ENCODE measurements at regions of chr16 and their contacts with region 1.

Region 1: DNA sequence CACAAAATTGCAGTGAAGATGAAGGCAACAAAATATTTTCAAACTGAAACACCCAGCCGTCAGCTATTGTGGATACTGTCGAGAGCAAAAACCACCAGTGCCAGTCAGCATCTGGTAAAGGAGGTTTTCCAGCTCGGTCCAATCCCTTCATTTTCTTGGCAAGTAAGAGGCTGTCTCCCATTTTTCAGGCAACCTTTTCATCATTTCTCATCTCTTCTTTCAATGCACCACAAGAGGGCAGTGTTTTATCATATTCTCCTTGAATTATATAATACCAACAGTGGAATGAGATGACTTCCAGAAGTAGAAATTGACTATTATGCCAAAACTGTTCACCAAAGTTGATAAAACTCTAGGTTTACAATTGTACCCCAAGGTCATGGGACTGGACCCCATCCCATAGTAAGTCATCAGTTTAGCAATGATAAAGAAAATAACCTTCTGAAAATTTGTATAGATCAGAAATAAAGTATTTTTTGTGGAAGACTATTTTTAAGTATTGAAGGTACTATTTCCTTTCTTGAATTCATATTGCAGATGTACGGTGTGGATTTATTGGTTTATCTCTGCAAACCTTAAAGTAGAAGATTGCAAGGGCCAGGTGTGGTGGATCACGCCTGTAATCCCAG is 16.8 kb downstream of the NQO1 start:
- DNase-seq: no peak
- H3K4me3 ChIP-seq: no peak overlapping the region
- H3K27ac ChIP-seq: peak overlapping the region in 3 of 4 donors; percentile 43 to 75 (median 58)
- H3K4me1 ChIP-seq: peaks cover 0 to 70% (median 20%) of the 10 kb centered on the region in 3 donors
- H3K27me3 ChIP-seq: no peaks in the 10 kb centered on the region
- CTCF ChIP-seq: peak; percentile 51 to 86 (median 73)
- POLR2A ChIP-seq: no peak

Region 2: GRCh38 chr16:69396187-69397061 is 313.1 kb before region 1 on chr16:
- intact Hi-C with region 1: loop called (anchors 10 kb)
- DNase-seq: no peak
- H3K4me3 ChIP-seq: peak overlapping the region in 1 of 4 donors; percentile 24
- H3K27ac ChIP-seq: peak overlapping the region; percentile 57 to 84 (median 81)
- H3K4me1 ChIP-seq: peaks cover 6 to 40% (median 30%) of the 10 kb centered on the region in 3 donors
- H3K27me3 ChIP-seq: no peaks in the 10 kb centered on the region
- CTCF ChIP-seq: peak in 4 of 6 experiments; percentile 78 to 84 (median 78)
- POLR2A ChIP-seq: no peak

Region 3: GRCh38 chr16:69754469-69755310 is 45.1 kb after region 1 on chr16 and contains the start of gene NOB1:
- intact Hi-C with region 1: loop called (anchors 5 kb)
- DNase-seq: peak; percentile 76
- H3K4me3 ChIP-seq: peak within 1 kb of the TSS; percentile 80 to 92 (median 89)
- H3K27ac ChIP-seq: peak within 1 kb of the TSS; percentile 73 to 89 (median 86)
- H3K4me1 ChIP-seq: peaks cover 14 to 30% (median 18%) of the 10 kb centered on the region in 3 donors
- H3K27me3 ChIP-seq: no peaks in the 10 kb centered on the region
- CTCF ChIP-seq: peak; percentile 96 to 100 (median 100)
- POLR2A ChIP-seq: peak in 3 of 4 donors; percentile 56 to 63 (median 61)
- total RNA-seq, gene NOB1: 34.4 to 55.1 (median 45.2) TPM

Region 4: GRCh38 chr16:69823831-69824563 is 114.4 kb after region 1 on chr16:
- intact Hi-C with region 1: no loop called
- DNase-seq: no peak
- H3K4me3 ChIP-seq: no peak overlapping the region
- H3K27ac ChIP-seq: peak overlapping the region in 3 of 4 donors; percentile 33 to 70 (median 45)
- H3K4me1 ChIP-seq: peaks cover 0 to 17% (median 0%) of the 10 kb centered on the region in 3 donors
- H3K27me3 ChIP-seq: no peaks in the 10 kb centered on the region
- CTCF ChIP-seq: no peak
- POLR2A ChIP-seq: no peak